CD4-positive, alpha-beta T cell (primary cell): ENCODE measurements at regions of chr18 and their contacts with region 1.

Region 1: GRCh38 chr18:48777026-48777743 is 173.6 kb downstream of the SMAD7 start:
- DNase-seq: peak; percentile 49 to 86 (median 66)
- ATAC-seq: peak; percentile 91
- H3K4me3 ChIP-seq: no peak overlapping the region
- H3K4me3 Mint-ChIP-seq: no peak overlapping the region
- H3K27ac ChIP-seq: no peak overlapping the region
- H3K27ac Mint-ChIP-seq: no peak overlapping the region
- H3K4me1 ChIP-seq: peaks cover 18% of the 10 kb centered on the region
- H3K4me1 Mint-ChIP-seq: peaks cover 6% of the 10 kb centered on the region
- H3K27me3 ChIP-seq: no peaks in the 10 kb centered on the region
- H3K27me3 Mint-ChIP-seq: no peaks in the 10 kb centered on the region
- CTCF ChIP-seq: peak; percentile 91

Region 2: DNA sequence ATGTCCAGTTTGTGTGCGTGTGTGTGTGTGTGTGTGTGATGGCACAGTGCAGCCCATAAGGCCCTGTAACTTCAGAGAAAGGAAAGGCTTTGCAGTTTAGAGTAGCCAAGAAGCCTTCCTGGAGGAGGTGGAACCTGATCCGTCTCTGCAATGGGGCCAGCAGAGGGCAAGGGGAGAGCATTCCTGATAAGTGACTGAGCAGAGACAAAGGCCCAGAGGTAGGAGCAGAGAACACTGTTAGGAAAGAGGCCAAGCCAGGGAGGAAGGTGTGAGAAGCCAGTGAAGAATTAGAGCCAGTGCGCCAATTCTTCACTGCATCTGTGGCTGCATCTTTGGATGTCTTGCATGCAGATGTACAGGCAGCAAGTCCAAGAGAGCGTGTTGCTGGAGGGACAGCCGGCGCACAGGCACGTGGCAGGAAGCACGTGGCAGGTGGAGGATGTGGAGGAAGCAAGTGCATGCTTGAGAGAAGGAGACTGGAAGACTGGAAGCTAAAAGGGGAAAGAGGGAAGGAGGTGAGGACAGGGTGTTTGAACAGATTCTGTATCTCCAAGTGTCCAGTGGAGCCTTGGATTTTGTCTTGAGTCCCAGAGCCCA is 42.0 kb before region 1 on chr18:
- CTCF ChIA-PET with region 1: no interaction called
- POLR2A ChIA-PET with region 1: no interaction called
- intact Hi-C with region 1: no loop called
- DNase-seq: no peak
- ATAC-seq: no peak
- H3K4me3 ChIP-seq: no peak overlapping the region
- H3K4me3 Mint-ChIP-seq: no peak overlapping the region
- H3K27ac ChIP-seq: no peak overlapping the region
- H3K27ac Mint-ChIP-seq: no peak overlapping the region
- H3K4me1 ChIP-seq: peaks cover 4% of the 10 kb centered on the region
- H3K4me1 Mint-ChIP-seq: no peaks in the 10 kb centered on the region
- H3K27me3 ChIP-seq: no peaks in the 10 kb centered on the region
- H3K27me3 Mint-ChIP-seq: no peaks in the 10 kb centered on the region
- CTCF ChIP-seq: no peak

Region 3: GRCh38 chr18:48766026-48766425 is 11.2 kb before region 1 on chr18:
- CTCF ChIA-PET with region 1: no interaction called
- POLR2A ChIA-PET with region 1: no interaction called
- intact Hi-C with region 1: no loop called
- DNase-seq: no peak
- ATAC-seq: no peak
- H3K4me3 ChIP-seq: no peak overlapping the region
- H3K4me3 Mint-ChIP-seq: no peak overlapping the region
- H3K27ac ChIP-seq: no peak overlapping the region
- H3K27ac Mint-ChIP-seq: no peak overlapping the region
- H3K4me1 ChIP-seq: peaks cover 9% of the 10 kb centered on the region
- H3K4me1 Mint-ChIP-seq: no peaks in the 10 kb centered on the region
- H3K27me3 ChIP-seq: no peaks in the 10 kb centered on the region
- H3K27me3 Mint-ChIP-seq: no peaks in the 10 kb centered on the region
- CTCF ChIP-seq: no peak

Region 4: GRCh38 chr18:48913201-48913600 is 136.0 kb after region 1 on chr18:
- CTCF ChIA-PET with region 1: interaction called, 13 read pairs
- POLR2A ChIA-PET with region 1: interaction called, 3 read pairs
- intact Hi-C with region 1: loop called (anchors 1 kb)
- DNase-seq: peak; percentile 45 to 81 (median 54)
- ATAC-seq: peak; percentile 77
- H3K4me3 ChIP-seq: no peak overlapping the region
- H3K4me3 Mint-ChIP-seq: no peak overlapping the region
- H3K27ac ChIP-seq: no peak overlapping the region
- H3K27ac Mint-ChIP-seq: no peak overlapping the region
- H3K4me1 ChIP-seq: peaks cover 27% of the 10 kb centered on the region
- H3K4me1 Mint-ChIP-seq: peaks cover 49% of the 10 kb centered on the region
- H3K27me3 ChIP-seq: no peaks in the 10 kb centered on the region
- H3K27me3 Mint-ChIP-seq: no peaks in the 10 kb centered on the region
- CTCF ChIP-seq: peak; percentile 57

Region 5: GRCh38 chr18:49041435-49042245 is 264.5 kb after region 1 on chr18:
- CTCF ChIA-PET with region 1: interaction called, 7 read pairs
- POLR2A ChIA-PET with region 1: no interaction called
- intact Hi-C with region 1: loop called (anchors 1 kb)
- DNase-seq: peak; percentile 27 to 73 (median 52)
- ATAC-seq: peak; percentile 68
- H3K4me3 ChIP-seq: no peak overlapping the region
- H3K4me3 Mint-ChIP-seq: no peak overlapping the region
- H3K27ac ChIP-seq: no peak overlapping the region
- H3K27ac Mint-ChIP-seq: no peak overlapping the region
- H3K4me1 ChIP-seq: no peaks in the 10 kb centered on the region
- H3K4me1 Mint-ChIP-seq: peaks cover 8% of the 10 kb centered on the region
- H3K27me3 ChIP-seq: no peaks in the 10 kb centered on the region
- H3K27me3 Mint-ChIP-seq: no peaks in the 10 kb centered on the region
- CTCF ChIP-seq: peak; percentile 60

Region 6: GRCh38 chr18:49238433-49239042 is 461.4 kb after region 1 on chr18:
- CTCF ChIA-PET with region 1: no interaction called
- POLR2A ChIA-PET with region 1: no interaction called
- intact Hi-C with region 1: loop called in 1 of 2 experiments (anchors 2 kb)
- DNase-seq: peak in 3 of 14 experiments; percentile 19 to 34 (median 32)
- ATAC-seq: no peak
- H3K4me3 ChIP-seq: no peak overlapping the region
- H3K4me3 Mint-ChIP-seq: no peak overlapping the region
- H3K27ac ChIP-seq: no peak overlapping the region
- H3K27ac Mint-ChIP-seq: no peak overlapping the region
- H3K4me1 ChIP-seq: no peaks in the 10 kb centered on the region
- H3K4me1 Mint-ChIP-seq: no peaks in the 10 kb centered on the region
- H3K27me3 ChIP-seq: no peaks in the 10 kb centered on the region
- H3K27me3 Mint-ChIP-seq: no peaks in the 10 kb centered on the region
- CTCF ChIP-seq: peak; percentile 26

Region 7: DNA sequence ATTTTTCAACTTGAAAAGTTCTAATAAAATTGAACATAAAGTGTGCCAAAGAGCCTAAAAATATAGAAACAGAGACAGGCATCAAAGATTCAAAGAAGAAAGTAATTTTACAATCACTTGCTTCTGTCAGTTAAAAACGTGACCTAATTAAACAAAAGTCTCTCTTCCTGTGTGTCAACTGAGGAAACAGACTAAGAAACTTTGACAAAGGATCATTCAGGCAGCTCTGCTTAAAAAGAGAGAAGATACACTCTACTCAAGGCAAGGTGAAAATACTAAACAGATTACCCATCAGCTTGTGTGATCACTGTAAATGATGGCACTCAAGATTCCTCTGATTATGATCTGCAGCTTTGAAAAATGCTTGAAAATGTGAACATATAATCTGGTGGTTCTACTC is 635.5 kb after region 1 on chr18:
- CTCF ChIA-PET with region 1: no interaction called
- POLR2A ChIA-PET with region 1: no interaction called
- intact Hi-C with region 1: loop called in 1 of 2 experiments (anchors 5 kb)
- DNase-seq: peak in 2 of 14 experiments; percentile 6 to 31
- ATAC-seq: peak; percentile 52
- H3K4me3 ChIP-seq: no peak overlapping the region
- H3K4me3 Mint-ChIP-seq: peak overlapping the region; percentile 18
- H3K27ac ChIP-seq: peak overlapping the region in 1 of 2 donors; percentile 9
- H3K27ac Mint-ChIP-seq: peak overlapping the region; percentile 82
- H3K4me1 ChIP-seq: no peaks in the 10 kb centered on the region
- H3K4me1 Mint-ChIP-seq: peaks cover 38% of the 10 kb centered on the region
- H3K27me3 ChIP-seq: no peaks in the 10 kb centered on the region
- H3K27me3 Mint-ChIP-seq: no peaks in the 10 kb centered on the region
- CTCF ChIP-seq: no peak